BJ (cell line): ENCODE measurements at regions of chr14 and their contacts with region 1.

Region 1: DNA sequence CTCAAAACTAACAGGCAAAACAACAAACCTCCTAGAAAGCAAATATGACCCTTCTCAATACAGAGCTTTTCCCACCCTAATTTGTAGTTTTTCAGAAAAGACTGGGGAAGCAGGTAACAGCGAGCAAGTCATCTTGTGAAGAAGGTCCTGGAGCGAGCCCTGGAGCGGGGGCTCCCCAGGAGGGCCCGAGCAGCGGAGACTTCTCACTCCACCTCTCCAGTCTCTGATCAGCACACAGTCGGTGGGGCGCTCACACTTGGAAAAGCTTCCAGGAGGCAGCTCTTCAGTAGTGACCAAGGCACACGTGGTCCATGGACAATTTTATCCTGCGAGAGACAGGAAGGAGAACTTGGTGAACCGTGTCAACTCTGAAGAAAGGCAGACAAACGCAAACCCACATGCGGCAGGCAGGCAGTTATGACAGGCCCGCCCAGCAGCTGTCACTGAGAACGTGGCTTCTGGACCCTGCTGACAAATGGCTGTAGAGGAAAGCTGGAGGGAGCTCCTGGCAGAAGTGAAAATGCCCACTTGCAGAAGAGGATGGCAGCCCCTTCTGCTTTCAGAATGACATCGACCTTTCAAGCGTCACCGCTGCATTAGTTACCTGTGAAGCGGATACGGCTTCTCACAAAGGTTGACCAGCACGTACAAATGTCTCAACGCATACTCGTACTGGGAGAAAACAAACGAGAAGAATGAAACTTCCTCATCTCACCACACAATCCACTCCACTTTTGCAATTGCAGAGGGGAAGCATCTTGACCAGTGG is 44.2 kb downstream of the LGMN start:
- DNase-seq: no peak
- H3K4me3 ChIP-seq: no peak overlapping the region
- H3K27me3 ChIP-seq: no peaks in the 10 kb centered on the region
- CTCF ChIP-seq: no peak

Region 2: DNA sequence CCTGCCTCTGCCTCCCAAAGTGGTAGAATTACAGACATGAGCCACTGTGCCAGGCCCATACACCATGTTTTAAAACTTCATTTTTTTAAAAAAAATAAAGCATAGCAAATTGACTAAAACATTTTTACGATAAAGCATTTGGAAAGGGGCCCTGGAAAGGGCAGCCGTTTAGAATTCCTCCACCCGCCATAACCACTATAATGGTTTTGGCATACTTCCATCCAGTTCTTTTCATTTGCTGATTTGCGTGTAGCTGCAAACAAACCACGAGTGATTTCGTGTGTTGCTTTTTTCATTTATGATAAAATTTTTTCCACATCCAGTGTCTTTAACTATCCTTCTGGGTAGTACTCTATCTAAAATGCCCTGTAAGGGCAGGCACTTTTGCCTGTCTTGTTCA is 282.5 kb before region 1 on chr14:
- CTCF ChIA-PET with region 1: no interaction called
- POLR2A ChIA-PET with region 1: interaction called, 11 read pairs
- DNase-seq: no peak
- H3K4me3 ChIP-seq: no peak overlapping the region
- H3K27me3 ChIP-seq: peaks cover 8% of the 10 kb centered on the region
- CTCF ChIP-seq: no peak

Region 3: GRCh38 chr14:92513204-92513973 is 190.8 kb before region 1 on chr14 and contains the start of gene RIN3:
- CTCF ChIA-PET with region 1: no interaction called
- POLR2A ChIA-PET with region 1: no interaction called
- DNase-seq: no peak
- H3K4me3 ChIP-seq: peak within 1 kb of the TSS; percentile 79
- H3K27me3 ChIP-seq: no peaks in the 10 kb centered on the region
- CTCF ChIP-seq: no peak
- polyA plus RNA-seq, gene RIN3: 4.3 and 8.2 TPM in 2 replicates

Region 4: GRCh38 chr14:92719890-92720323 is 15.7 kb after region 1 on chr14:
- CTCF ChIA-PET with region 1: interaction called, 11 read pairs
- POLR2A ChIA-PET with region 1: no interaction called
- DNase-seq: peak; percentile 14
- H3K4me3 ChIP-seq: no peak overlapping the region
- H3K27me3 ChIP-seq: no peaks in the 10 kb centered on the region
- CTCF ChIP-seq: no peak

Region 5: DNA sequence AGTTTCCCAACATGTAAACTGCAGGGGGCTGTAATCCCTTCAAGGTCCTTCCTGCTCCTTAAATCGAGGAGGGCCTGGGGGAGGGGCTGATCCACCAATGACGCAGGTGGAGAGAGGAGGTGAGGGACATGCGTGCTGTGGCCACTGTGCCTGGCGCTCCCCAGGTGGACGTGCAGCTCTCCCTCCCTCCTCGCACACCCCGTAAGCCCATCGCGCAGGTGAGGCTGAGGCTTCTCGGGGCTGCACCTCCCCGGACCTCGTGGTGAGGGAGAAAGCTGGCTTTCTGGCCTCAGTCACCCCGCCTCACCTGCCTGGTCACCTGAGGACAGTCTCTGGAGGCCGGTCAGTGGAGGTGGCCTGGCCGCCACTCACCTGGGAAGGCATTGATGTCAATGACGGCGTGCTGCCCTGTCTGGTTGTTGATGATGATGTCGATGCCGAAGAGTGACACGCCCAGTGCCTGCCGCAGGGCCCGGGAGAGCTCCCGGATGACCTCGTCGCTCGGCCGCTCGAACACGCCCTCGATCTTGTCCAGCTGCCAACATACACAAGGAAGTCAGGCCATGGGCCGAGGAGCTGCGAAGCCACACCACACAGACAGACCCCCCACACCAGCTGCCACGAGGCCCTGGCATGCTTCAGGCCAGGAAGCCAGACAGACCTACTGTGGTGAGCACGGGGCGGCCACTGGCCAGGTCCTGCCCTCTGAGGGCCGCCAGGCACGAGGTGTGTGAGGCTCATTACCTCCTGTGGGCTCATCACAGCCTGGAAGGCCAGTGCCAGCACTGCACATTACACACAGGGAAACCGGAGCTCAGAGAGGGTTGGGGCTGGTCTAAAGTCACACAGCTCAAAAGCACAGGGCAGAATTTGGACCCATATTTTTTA is 242.0 kb after region 1 on chr14:
- CTCF ChIA-PET with region 1: no interaction called
- POLR2A ChIA-PET with region 1: no interaction called
- DNase-seq: no peak
- H3K4me3 ChIP-seq: no peak overlapping the region
- H3K27me3 ChIP-seq: no peaks in the 10 kb centered on the region
- CTCF ChIP-seq: no peak